Posterior vena cava (tissue), 2 donors: ENCODE measurements at regions of chr17 and their contacts with region 1.

Region 1: GRCh38 chr17:28842282-28843012 is at the start of gene FAM222B:
- DNase-seq: peak; percentile 96
- total RNA-seq, gene FAM222B: 13.8 to 19.2 TPM

Region 2: DNA sequence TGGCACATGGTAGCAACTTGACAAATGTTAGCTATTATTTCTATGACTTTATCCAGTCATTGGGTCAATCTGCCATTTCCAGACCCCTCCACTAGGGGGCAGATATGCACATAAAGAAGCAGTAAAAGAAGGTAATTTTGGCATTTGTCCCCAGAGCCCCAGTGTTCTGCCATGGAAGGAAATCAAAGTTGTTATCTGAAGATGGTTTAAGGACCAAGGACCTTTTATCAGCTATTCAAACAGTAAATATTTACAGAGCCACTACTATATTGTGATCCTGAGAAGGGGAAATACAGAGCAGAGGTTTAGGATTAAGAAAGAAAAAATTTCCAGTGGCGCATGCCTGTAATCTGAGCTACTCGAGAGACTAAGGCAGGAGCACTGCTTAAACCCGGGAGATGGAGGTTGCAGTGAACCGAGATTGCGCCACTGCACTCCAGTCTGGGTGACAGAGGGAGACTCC is 78.6 kb before region 1 on chr17:
- intact Hi-C with region 1: loop called in 1 of 2 experiments (anchors 10 kb)
- DNase-seq: peak; percentile 78

Region 3: DNA sequence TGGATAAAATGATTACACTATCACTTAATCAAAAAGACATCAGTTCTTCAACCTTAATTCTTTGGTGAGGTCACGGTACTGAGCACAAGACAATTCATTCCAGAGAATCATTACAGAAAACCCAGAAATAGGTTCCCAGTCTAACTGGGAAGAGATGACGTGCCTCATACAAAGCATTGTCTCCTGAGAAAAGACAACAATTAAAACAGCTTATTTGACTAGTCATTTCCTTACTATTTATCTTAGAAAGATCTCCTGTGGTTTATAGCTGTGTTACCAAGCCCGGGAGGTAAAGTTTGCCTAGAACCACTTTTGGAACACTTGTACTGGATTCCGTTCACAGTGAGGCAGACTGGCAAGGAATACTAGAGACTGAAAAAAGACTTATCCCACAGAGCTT is 103.8 kb after region 1 on chr17:
- intact Hi-C with region 1: no loop called
- DNase-seq: no peak

Region 4: GRCh38 chr17:30831663-30832437 is 1989.4 kb after region 1 on chr17 and contains the start of gene ATAD5:
- intact Hi-C with region 1: no loop called
- DNase-seq: peak; percentile 97
- total RNA-seq, gene ATAD5: 1.4 to 1.5 TPM